Vagina (tissue), 2 donors: ENCODE measurements at regions of chr19 and their contacts with region 1.

Region 1: GRCh38 chr19:39412100-39412866 is at the start of gene PLEKHG2:
- DNase-seq: peak in 1 of 2 donors; percentile 100
- H3K4me3 ChIP-seq: peak within 1 kb of the TSS; percentile 97 to 98
- H3K27ac ChIP-seq: peak within 1 kb of the TSS; percentile 100
- H3K4me1 ChIP-seq: peaks cover 55% of the 10 kb centered on the region
- H3K27me3 ChIP-seq: no peaks in the 10 kb centered on the region
- CTCF ChIP-seq: peak; percentile 74 to 89 (median 77)
- POLR2A ChIP-seq: peak in 1 of 2 donors; percentile 45
- total RNA-seq, gene PLEKHG2: 18.9 TPM

Region 2: GRCh38 chr19:39341719-39342604 is 70.3 kb before region 1 on chr19 and contains the start of gene SAMD4B:
- intact Hi-C with region 1: loop called (anchors 5 kb)
- DNase-seq: peak in 1 of 2 donors; percentile 98
- H3K4me3 ChIP-seq: peak within 1 kb of the TSS; percentile 91 to 96
- H3K27ac ChIP-seq: peak within 1 kb of the TSS; percentile 95
- H3K4me1 ChIP-seq: peaks cover 54% of the 10 kb centered on the region
- H3K27me3 ChIP-seq: no peaks in the 10 kb centered on the region
- CTCF ChIP-seq: peak; percentile 50 to 82 (median 71)
- POLR2A ChIP-seq: peak in 1 of 2 donors; percentile 95
- total RNA-seq, gene SAMD4B: 128 TPM

Region 3: DNA sequence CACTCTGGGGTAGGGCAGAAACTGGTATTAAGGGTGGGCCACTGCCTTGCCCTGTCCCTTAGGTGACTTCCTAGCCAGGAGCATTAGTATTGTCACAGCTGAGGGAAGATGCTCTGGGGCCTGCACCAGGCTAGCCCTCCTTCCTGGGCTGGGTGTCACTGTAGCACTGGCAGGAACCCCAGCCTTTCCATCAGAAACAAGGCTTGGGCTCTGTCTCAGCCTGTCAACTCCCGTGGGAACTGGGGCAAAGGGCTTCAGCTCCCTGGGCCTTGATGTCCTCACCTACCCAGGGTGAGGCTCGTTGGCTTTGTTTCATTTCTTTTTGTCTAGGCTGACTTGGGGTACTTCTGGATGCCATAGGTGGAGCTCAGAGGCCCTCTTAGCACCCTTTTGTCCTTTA is 39.3 kb before region 1 on chr19:
- intact Hi-C with region 1: no loop called
- DNase-seq: no peak
- H3K4me3 ChIP-seq: peak overlapping the region; percentile 2 to 28
- H3K27ac ChIP-seq: peak overlapping the region; percentile 94
- H3K4me1 ChIP-seq: peaks cover 33% of the 10 kb centered on the region
- H3K27me3 ChIP-seq: no peaks in the 10 kb centered on the region
- CTCF ChIP-seq: no peak
- POLR2A ChIP-seq: no peak